Activated naive CD4-positive, alpha-beta T cell treated with anti-CD3 and anti-CD28 coated beads, Interleukin-2, amount 10 ng/mL, durations not matched to agents 7 days and 5 days (primary cell): ENCODE measurements at regions of chr14 and their contacts with region 1.

Region 1: DNA sequence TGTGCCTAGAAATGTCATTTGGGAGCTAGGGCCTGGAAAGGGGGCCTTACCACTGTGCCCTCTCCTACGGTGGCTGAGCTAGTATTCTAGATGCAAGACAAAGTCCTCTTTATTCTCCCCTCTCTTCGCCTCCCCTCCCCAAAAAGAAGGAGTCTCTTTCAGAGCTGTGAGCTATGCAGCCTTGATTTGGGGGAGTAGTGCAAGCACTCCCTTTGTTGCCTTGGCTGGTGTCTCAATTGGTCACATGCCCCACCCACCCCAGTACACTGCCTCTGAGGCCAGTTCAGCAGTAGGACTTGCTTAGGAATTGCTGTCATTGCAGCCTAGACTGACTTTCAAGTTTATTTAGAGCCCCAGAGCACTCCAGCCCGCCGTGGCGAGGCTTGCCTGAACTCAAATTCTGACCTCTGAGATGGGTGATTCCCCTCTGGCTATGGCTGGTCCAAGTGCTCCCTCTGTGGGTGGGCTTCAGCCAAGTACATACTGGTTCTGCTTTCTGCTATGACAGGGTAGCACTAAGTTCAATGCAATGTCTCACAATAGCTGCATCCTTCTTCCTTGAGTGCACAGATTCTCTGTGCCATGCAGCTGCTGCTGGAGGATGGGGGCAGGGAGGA is 37.0 kb upstream of the FBXO33 start:
- DNase-seq: peak; percentile 34
- H3K4me3 Mint-ChIP-seq: no peak overlapping the region
- H3K27ac Mint-ChIP-seq: no peak overlapping the region
- H3K4me1 Mint-ChIP-seq: no peaks in the 10 kb centered on the region
- H3K27me3 Mint-ChIP-seq: peaks cover 13% of the 10 kb centered on the region

Region 2: GRCh38 chr14:39488600-39488999 is 19.4 kb after region 1 on chr14:
- CTCF ChIA-PET with region 1: interaction called, 14 read pairs
- DNase-seq: no peak
- H3K4me3 Mint-ChIP-seq: no peak overlapping the region
- H3K27ac Mint-ChIP-seq: no peak overlapping the region
- H3K4me1 Mint-ChIP-seq: no peaks in the 10 kb centered on the region
- H3K27me3 Mint-ChIP-seq: no peaks in the 10 kb centered on the region

Region 3: DNA sequence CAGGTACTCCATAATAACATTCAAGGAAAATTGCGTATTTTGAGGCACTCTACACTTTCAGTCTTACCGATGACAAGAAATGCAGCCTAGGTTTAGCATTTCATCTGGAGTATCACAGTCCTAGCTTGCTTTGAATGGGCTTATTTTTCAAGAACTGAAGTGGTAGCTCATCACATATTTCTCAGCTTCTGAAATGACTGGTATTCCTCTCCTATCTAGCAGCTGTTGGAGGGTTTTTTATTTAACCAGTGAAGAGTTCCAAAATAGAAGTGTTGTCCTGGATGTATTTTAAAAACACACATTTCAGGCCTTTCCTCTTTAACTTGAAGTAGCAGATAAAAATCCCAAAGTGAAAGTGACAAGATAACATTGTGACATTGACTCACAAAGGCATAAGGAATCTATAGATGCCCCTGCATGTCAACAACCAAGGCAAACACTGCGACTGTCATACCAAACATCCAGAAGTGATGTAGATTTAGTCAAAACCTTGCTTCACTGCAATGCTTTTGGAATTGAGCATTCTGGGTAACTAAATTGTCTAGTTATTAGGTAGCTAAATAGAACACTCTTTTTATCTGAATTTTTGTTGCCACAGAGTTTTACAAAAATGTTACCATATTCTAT is 145.2 kb after region 1 on chr14:
- CTCF ChIA-PET with region 1: no interaction called
- DNase-seq: no peak
- H3K4me3 Mint-ChIP-seq: no peak overlapping the region
- H3K27ac Mint-ChIP-seq: no peak overlapping the region
- H3K4me1 Mint-ChIP-seq: peaks cover 2% of the 10 kb centered on the region
- H3K27me3 Mint-ChIP-seq: no peaks in the 10 kb centered on the region